ENCODE measurements at regions of chr5 and their contacts with region 1.

Region 1: GRCh38 chr5:67246108-67246507 is 49.5 kb upstream of the CD180 start:
- DNase-seq: peak in 1 of 10 donors; percentile 40
- H3K4me3 ChIP-seq: no peak overlapping the region
- H3K27ac ChIP-seq: peak overlapping the region in 58 of 59 donors; percentile 18 to 96 (median 81)
- H3K27me3 ChIP-seq: no peaks in the 10 kb centered on the region
- CTCF ChIP-seq: peak; percentile 74 to 100 (median 90)

Region 2: DNA sequence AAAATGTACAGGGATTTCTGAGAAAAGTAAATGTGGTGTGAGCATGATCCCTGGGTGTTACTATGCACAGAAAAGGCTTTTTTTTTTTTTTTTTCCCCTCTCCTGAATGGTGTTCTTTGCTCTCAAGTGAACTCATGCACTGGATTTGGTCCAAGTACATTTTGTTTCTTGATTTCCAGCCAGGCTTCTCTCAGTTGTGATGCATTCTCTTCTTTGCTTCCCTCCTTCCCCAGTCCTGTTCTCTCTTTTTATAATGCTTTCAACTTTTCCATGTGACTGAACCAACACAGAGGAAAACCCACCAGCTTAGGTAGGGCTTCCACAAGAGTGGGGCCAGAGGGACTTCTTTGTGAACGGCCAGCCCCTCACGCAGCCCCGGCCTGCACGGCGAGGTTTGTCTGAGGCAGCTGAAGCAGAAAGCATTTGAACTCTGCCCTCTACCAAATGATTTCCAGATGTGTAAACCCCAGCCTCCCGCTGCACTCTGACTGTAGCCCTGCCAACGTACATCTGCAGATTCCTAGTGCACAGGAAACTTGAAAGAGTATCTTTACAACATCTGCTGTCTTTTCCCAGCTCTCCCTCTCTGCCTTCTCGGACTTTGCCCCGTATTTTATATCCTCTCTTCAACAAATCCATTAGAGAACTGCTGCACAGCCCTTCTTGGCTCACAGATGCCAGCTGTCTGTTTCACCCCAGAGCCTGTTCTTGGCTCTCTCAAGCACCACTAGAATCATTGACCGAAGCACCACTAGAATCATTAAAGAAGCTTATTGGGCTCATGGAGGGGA is 22.3 kb after region 1 on chr5:
- intact Hi-C with region 1: loop called in 1 of 2 experiments (anchors 2 kb)
- DNase-seq: peak; percentile 44 to 81 (median 64)
- H3K4me3 ChIP-seq: peak overlapping the region in 43 of 59 donors; percentile 4 to 50 (median 23)
- H3K27ac ChIP-seq: peak overlapping the region; percentile 88 to 100 (median 99)
- H3K27me3 ChIP-seq: no peaks in the 10 kb centered on the region
- CTCF ChIP-seq: peak in 6 of 56 donors; percentile 4 to 39 (median 15)

Region 3: DNA sequence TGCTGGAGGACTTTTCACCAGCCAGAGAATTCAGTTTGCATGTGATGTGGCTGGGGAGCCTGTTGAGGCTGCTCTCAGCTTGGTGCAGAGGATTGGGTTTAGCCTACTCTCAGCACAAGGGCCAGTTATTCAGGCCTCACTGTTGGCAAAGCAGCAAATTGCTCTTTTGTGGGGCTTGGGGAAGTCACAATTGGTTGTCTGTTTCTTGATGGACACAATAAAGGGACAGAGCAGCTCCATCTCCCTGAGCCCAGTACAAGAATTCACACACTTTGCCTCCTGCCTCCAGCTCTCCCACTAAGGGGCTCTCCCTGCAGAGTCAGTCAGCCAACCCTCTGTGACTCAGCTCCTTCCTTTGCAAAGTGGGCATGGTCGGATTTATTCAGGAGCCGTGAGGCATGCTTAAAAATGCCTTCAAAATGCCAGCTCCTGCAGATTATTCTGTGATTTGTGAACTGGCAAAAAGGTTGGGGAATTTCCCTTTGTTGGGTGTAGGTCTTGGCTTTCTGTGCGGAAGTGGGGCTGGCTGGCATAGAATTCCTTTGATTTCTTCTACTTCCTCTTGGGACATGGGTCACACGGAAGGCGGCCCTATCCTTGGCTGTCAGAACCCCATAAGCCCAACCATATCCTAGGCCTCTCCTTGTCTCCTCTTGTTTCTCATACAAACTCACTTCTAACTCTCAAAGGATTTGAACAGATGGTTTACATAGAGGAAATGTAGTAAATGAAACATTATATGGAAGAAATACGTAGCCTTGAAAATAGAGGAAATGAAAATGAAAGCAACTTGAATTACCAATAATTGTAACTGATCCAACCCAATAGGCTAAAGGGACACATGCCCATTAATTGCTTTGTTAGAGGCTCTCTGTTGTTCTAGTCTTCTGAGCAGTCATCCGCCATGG is 69.2 kb after region 1 on chr5:
- intact Hi-C with region 1: loop called in 1 of 2 experiments (anchors 5 kb)
- DNase-seq: peak; percentile 20 to 93 (median 84)
- H3K4me3 ChIP-seq: peak overlapping the region in 10 of 59 donors; percentile 1 to 35 (median 12)
- H3K27ac ChIP-seq: peak overlapping the region; percentile 35 to 98 (median 92)
- H3K27me3 ChIP-seq: no peaks in the 10 kb centered on the region
- CTCF ChIP-seq: peak in 35 of 56 donors; percentile 10 to 57 (median 29)

Region 4: GRCh38 chr5:67493676-67494075 is 247.6 kb after region 1 on chr5:
- intact Hi-C with region 1: loop called in 1 of 2 experiments (anchors 10 kb)
- DNase-seq: peak; percentile 42 to 86 (median 69)
- H3K4me3 ChIP-seq: peak overlapping the region in 1 of 59 donors; percentile 0
- H3K27ac ChIP-seq: peak overlapping the region in 48 of 59 donors; percentile 5 to 80 (median 58)
- H3K27me3 ChIP-seq: no peaks in the 10 kb centered on the region
- CTCF ChIP-seq: peak; percentile 25 to 79 (median 63)

Region 5: GRCh38 chr5:68252673-68253623 is 1006.8 kb after region 1 on chr5:
- intact Hi-C with region 1: loop called (anchors 10 kb)
- DNase-seq: peak in 8 of 10 donors; percentile 52 to 77 (median 60)
- H3K4me3 ChIP-seq: peak overlapping the region in 19 of 59 donors; percentile 0 to 28 (median 5)
- H3K27ac ChIP-seq: peak overlapping the region; percentile 18 to 86 (median 75)
- H3K27me3 ChIP-seq: no peaks in the 10 kb centered on the region
- CTCF ChIP-seq: peak; percentile 35 to 86 (median 70)

Measured in dorsolateral prefrontal cortex (tissue), 120 donors.